Cardiac septum (tissue), 1 donor: ENCODE measurements at regions of chr16 and their contacts with region 1.

Region 1: DNA sequence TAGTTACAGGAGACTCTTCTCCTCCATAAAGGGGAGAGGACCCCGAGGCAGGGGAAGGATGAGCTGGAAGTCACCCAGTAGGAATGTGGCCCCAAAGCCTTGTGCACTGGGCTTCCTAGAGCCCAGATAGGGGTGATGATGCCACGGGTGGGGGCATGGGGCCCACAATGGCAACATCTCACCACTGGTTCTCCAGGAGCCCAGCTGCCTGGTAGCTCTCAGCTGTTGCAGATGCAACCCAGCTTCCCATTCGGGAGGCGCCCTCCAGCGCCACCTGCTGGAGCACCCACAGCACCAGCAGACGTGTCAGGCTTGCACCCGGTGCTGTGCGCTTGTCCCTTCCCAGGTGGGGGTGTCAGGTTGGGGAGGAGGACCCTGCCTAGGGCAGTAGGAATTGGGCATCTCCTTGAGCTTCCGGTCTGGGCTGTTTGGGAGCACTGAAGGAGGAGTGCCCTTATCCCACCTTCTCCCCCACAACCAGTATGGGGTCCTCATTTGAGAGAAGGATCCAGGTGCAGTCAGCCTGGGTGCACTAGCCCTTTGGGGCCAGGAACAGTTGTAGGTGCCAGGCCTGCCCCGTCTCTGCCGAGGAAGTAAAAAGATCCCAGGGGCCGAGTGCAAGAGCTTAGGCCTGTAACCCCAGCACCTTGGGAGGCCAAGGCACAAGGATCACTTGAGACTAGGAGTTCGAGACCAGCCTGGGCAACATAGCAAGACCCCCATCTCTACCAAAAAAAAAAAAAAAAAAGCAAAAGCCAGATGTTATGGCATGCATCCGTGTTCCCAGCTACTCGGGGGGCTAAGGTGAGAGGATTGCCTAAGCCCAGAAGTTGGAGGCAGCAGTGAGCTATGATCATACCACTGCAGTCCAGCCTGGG is 14.4 kb downstream of the CDIPT start:
- DNase-seq: peak; percentile 93

Region 2: DNA sequence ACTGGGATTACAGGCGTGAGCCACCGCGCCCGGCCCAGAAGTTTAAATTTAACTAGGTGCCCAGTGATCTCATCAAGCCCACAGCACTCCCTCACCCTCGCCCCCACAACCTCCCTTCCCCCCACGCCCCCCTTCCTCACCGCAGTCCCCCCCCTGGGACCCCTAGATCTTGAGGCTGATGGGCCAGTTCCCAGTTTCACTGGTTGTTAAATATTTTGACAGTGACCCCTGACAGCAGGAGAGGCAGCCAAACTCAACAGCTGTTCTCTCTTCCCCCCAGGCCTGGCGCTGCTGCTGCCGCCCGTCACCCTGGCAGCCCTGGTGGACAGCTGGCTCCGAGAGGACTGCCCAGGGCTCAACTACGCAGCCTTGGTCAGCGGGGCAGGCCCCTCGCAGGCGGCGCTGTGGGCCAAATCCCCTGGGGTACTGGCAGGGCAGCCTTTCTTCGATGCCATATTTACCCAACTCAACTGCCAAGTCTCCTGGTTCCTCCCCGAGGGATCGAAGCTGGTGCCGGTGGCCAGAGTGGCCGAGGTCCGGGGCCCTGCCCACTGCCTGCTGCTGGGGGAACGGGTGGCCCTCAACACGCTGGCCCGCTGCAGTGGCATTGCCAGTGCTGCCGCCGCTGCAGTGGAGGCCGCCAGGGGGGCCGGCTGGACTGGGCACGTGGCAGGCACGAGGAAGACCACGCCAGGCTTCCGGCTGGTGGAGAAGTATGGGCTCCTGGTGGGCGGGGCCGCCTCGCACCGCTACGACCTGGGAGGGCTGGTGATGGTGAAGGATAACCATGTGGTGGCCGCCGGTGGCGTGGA is 154.1 kb before region 1 on chr16:
- intact Hi-C with region 1: loop called (anchors 5 kb)
- DNase-seq: no peak

Region 3: DNA sequence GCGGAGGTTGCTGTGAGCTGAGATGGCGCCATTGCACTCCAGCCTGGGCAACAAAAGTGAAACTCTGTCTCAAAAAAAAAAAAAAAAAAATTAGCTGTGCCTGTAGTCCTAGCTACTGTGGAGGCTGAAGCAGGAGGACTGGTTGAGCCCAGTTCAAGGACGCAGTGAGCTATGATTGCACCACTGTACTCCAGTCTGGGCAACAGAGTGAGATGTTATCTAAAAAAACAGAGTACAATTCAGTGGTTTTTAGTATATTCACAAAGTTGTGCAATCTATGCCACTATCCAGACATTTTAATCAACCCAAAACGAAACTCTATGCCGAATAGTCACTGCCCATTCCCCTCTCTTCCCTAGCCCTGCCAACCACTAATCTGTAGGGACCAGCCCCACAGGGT is 128.0 kb before region 1 on chr16:
- intact Hi-C with region 1: no loop called
- DNase-seq: no peak

Region 4: GRCh38 chr16:29891525-29892457 is 43.1 kb after region 1 on chr16:
- intact Hi-C with region 1: no loop called
- DNase-seq: no peak